Activated B cell treated with CpG ODN at 0.5 μM for 24 hours (primary cell): ENCODE measurements at regions of chr5 and their contacts with region 1.

Region 1: GRCh38 chr5:173232499-173233346 is 2.3 kb downstream of the NKX2-5 start:
- DNase-seq: no peak
- ATAC-seq: no peak
- H3K4me3 Mint-ChIP-seq: no peak overlapping the region
- H3K27ac Mint-ChIP-seq: no peak overlapping the region
- H3K4me1 Mint-ChIP-seq: peaks cover 28% of the 10 kb centered on the region
- H3K27me3 Mint-ChIP-seq: peaks cover 73% of the 10 kb centered on the region
- CTCF ChIP-seq: no peak

Region 2: GRCh38 chr5:173331956-173332479 is 99.3 kb after region 1 on chr5:
- CTCF ChIA-PET with region 1: no interaction called
- POLR2A ChIA-PET with region 1: no interaction called
- intact Hi-C with region 1: loop called (anchors 5 kb)
- DNase-seq: peak; percentile 36
- ATAC-seq: peak; percentile 73
- H3K4me3 Mint-ChIP-seq: no peak overlapping the region
- H3K27ac Mint-ChIP-seq: no peak overlapping the region
- H3K4me1 Mint-ChIP-seq: peaks cover 12% of the 10 kb centered on the region
- H3K27me3 Mint-ChIP-seq: peaks cover 50% of the 10 kb centered on the region
- CTCF ChIP-seq: no peak